WTC11 (cell line): ENCODE measurements at regions of chr9 and their contacts with region 1.

Region 1: GRCh38 chr9:114653556-114654159 is 3.9 kb downstream of the TEX53 start:
- DNase-seq: peak; percentile 81
- ATAC-seq: peak; percentile 96
- H3K4me3 Mint-ChIP-seq: no peak overlapping the region
- H3K27ac Mint-ChIP-seq: no peak overlapping the region
- H3K4me1 Mint-ChIP-seq: peaks cover 4% of the 10 kb centered on the region; the same call in 1 of the 2 replicates
- H3K27me3 Mint-ChIP-seq: no peaks in the 10 kb centered on the region; the same call in 1 of the 2 replicates
- CTCF ChIP-seq: peak; percentile 74

Region 2: DNA sequence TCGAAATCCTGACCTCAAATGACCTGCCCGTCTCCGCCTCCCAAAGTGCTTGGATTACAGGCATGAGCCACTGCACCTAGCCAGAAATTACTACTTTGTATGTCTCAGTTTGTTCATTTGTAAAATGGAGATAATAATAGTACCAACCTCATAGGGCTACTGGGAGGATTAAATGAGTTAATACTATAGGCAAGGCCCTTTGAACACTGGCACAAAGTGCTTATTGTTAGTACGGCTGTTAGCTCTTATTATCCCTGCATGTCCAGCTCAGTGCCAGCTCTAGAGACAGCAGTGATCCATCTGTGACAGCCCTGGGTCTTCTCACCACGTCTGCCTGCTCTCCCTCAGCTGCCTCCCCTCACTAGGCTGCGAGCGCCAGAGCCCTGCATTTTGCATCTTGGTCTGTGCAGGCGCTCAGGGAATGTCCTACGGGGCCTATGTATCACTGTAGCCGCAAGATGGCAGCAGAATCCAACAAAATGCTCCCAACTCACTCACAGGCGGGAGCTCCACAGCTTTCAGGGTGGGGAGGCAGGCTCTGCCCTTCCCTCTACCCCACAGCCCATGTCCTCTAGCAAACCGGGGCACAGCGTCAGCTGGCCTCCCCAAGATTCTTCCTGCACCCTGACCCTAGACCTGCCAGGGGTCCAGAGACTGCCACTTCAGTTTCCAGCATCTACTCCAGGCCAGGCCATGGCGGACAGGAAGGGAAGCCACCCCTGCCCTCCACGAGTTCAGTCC is 248.2 kb before region 1 on chr9:
- CTCF ChIA-PET with region 1: interaction called, 130 read pairs
- POLR2A ChIA-PET with region 1: interaction called, 4 read pairs
- DNase-seq: peak; percentile 82
- ATAC-seq: peak; percentile 93
- H3K4me3 Mint-ChIP-seq: no peak overlapping the region
- H3K27ac Mint-ChIP-seq: no peak overlapping the region
- H3K4me1 Mint-ChIP-seq: peaks cover 19% of the 10 kb centered on the region
- H3K27me3 Mint-ChIP-seq: no peaks in the 10 kb centered on the region
- CTCF ChIP-seq: peak; percentile 66

Region 3: DNA sequence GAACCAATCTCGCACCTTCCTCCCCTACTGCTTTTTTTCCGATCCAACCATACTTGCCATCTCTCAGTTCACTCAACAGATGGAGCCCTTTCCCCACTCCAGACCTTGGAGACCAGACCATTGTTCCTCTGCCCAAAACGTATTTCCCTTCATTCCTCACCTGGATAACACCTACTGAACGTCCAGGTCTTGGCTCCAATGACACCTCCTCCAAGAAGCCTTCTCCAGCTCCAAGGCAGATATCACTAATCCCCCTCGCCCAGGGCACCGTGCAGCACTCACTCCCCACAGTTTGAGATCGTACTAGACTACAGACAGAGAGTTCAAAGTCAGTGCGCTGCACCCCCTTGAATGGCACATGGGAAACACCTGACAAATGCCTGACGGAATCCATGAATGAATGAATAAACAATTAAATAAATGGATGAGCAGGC is 218.8 kb before region 1 on chr9:
- CTCF ChIA-PET with region 1: interaction called, 60 read pairs
- POLR2A ChIA-PET with region 1: no interaction called
- DNase-seq: peak; percentile 49
- ATAC-seq: peak; percentile 97
- H3K4me3 Mint-ChIP-seq: no peak overlapping the region
- H3K27ac Mint-ChIP-seq: no peak overlapping the region
- H3K4me1 Mint-ChIP-seq: peaks cover 3% of the 10 kb centered on the region; the same call in 1 of the 2 replicates
- H3K27me3 Mint-ChIP-seq: no peaks in the 10 kb centered on the region
- CTCF ChIP-seq: peak; percentile 25; the same call in 1 of the 2 replicates

Region 4: GRCh38 chr9:114505187-114506081 is 148.2 kb before region 1 on chr9 and contains the start of gene WHRN:
- CTCF ChIA-PET with region 1: interaction called, 86 read pairs
- POLR2A ChIA-PET with region 1: interaction called, 3 read pairs
- DNase-seq: peak; percentile 95
- ATAC-seq: peak; percentile 78
- H3K4me3 Mint-ChIP-seq: peak within 1 kb of the TSS; percentile 82
- H3K27ac Mint-ChIP-seq: peak within 1 kb of the TSS; percentile 18; the same call in 1 of the 2 replicates
- H3K4me1 Mint-ChIP-seq: peaks cover 61% of the 10 kb centered on the region
- H3K27me3 Mint-ChIP-seq: peaks cover 17% of the 10 kb centered on the region
- CTCF ChIP-seq: no peak
- total RNA-seq, gene WHRN: 20.6 to 24.3 TPM (median 23.3 TPM) in 3 replicates

Region 5: DNA sequence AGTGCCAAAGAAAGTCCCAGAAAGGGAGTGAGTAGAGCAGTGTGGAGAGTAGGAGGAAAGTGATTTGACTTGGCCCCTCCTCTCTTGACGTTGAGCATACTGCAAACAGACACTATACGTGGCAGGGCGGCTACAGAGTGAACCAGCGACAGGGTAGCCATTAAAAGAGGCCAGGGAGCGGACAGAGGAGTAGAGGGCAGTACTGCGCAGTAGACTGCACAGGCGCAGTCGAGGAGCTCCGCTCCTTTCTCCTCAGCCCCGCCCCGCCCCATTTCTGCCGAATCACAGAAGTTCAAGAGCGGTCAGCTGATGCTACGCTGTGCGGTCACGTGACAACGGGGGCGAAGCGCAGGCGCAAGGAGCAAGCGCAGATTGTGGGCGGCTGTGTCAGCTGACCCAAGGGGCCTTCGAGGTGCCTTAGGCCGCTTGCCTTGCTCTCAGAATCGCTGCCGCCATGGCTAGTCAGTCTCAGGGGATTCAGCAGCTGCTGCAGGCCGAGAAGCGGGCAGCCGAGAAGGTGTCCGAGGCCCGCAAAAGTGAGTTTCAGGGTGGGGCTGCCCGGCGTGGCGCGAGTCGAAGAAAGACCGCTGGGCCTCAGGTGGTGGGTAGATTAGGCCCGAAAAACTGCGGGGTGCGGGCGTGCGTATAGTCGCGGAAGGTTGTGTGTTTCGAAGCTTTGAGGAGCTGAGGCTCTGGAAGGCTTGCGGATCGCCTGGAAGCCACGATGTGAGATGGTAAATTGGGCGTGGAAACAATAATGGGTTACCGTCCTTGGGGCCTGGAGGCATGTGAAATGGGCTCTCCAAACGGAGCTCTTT is 66.1 kb before region 1 on chr9 and contains the start of gene ATP6V1G1:
- CTCF ChIA-PET with region 1: interaction called, 16 read pairs
- POLR2A ChIA-PET with region 1: no interaction called
- DNase-seq: peak; percentile 100
- ATAC-seq: peak; percentile 90
- H3K4me3 Mint-ChIP-seq: peak within 1 kb of the TSS; percentile 100
- H3K27ac Mint-ChIP-seq: peak within 1 kb of the TSS; percentile 94
- H3K4me1 Mint-ChIP-seq: peaks cover 52% of the 10 kb centered on the region
- H3K27me3 Mint-ChIP-seq: no peaks in the 10 kb centered on the region
- CTCF ChIP-seq: no peak
- total RNA-seq, gene ATP6V1G1: 91.3 to 108 TPM (median 92.4 TPM) in 3 replicates

Region 6: DNA sequence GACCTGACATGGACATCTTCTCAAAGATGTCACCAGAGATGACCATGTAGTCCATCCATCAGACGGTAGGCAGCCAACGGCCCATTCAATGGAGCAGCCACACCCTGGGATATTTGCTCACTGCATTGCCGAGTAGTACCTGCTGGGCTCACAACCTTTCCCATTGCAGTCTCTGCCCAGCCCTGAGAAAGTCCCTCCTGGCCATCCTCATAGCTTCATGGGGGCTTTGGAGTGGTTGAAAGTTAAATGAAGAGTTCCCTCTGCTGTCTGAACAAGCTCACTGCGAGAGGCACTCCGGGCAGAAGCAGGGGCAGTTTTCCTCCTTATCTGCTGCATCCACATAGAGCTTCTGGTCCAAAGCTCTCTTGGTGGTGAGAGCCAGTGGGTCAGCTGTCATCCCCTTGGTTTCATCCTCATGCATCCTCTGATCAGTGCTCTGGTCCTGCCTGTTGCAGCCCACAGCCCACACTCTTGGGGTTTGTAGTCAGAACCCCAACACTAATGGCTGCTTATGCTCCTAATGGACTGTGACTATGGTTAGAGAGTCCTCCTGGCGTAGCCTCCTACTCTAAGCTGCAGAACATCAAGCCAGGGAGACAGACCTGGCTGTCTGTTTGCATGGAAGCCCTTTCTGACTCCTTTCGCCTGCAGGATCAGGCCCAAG is 253.4 kb after region 1 on chr9:
- CTCF ChIA-PET with region 1: interaction called, 12 read pairs
- POLR2A ChIA-PET with region 1: no interaction called
- DNase-seq: peak; percentile 74
- ATAC-seq: peak; percentile 89
- H3K4me3 Mint-ChIP-seq: no peak overlapping the region
- H3K27ac Mint-ChIP-seq: no peak overlapping the region
- H3K4me1 Mint-ChIP-seq: peaks cover 24% of the 10 kb centered on the region
- H3K27me3 Mint-ChIP-seq: peaks cover 36% of the 10 kb centered on the region
- CTCF ChIP-seq: 0 out of 2 replicates have a peak, but pooled peaks have one; percentile 42